ENCODE measurements at regions of chr6 and their contacts with region 1.

Region 1: GRCh38 chr6:143427109-143427817 is 23.2 kb downstream of the ADAT2 start:
- DNase-seq: peak; percentile 68 to 78
- H3K4me3 ChIP-seq: no peak overlapping the region
- H3K4me3 Mint-ChIP-seq: no peak overlapping the region
- H3K27ac Mint-ChIP-seq: no peak overlapping the region
- H3K4me1 ChIP-seq: no peaks in the 10 kb centered on the region
- H3K4me1 Mint-ChIP-seq: no peaks in the 10 kb centered on the region
- H3K27me3 ChIP-seq: no peaks in the 10 kb centered on the region
- H3K27me3 Mint-ChIP-seq: no peaks in the 10 kb centered on the region
- CTCF ChIP-seq: peak; percentile 90 to 99

Region 2: GRCh38 chr6:142474531-142475289 is 952.6 kb before region 1 on chr6:
- CTCF ChIA-PET with region 1: interaction called, 9 read pairs
- POLR2A ChIA-PET with region 1: no interaction called
- intact Hi-C with region 1: loop called (anchors 1 kb)
- DNase-seq: peak; percentile 67 to 69
- H3K4me3 ChIP-seq: no peak overlapping the region
- H3K4me3 Mint-ChIP-seq: no peak overlapping the region
- H3K27ac Mint-ChIP-seq: no peak overlapping the region
- H3K4me1 ChIP-seq: no peaks in the 10 kb centered on the region
- H3K4me1 Mint-ChIP-seq: no peaks in the 10 kb centered on the region
- H3K27me3 ChIP-seq: no peaks in the 10 kb centered on the region
- H3K27me3 Mint-ChIP-seq: peaks cover 1% of the 10 kb centered on the region
- CTCF ChIP-seq: peak; percentile 57 to 60

Region 3: DNA sequence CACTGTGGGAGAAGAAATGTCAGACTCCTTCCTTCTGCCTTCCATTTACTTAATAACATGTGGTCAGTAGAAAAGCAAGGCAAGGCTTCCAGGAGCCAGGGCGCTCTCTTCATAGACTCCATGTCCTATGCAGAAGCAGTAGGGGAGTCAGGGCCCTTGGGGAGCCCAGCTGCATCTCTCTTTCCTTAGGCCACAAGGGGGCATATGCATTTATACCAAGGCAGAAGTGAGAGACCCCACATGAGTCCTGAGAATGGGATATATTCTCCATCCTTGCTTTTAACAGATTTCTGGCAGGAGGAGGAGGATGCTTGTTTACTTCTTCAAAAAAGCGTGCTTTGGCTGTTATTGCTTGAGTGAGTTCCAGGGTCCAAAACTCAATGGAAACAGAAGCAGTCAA is 680.7 kb before region 1 on chr6:
- CTCF ChIA-PET with region 1: no interaction called
- POLR2A ChIA-PET with region 1: no interaction called
- intact Hi-C with region 1: loop called (anchors 1 kb)
- DNase-seq: peak; percentile 36 to 47
- H3K4me3 ChIP-seq: no peak overlapping the region
- H3K4me3 Mint-ChIP-seq: no peak overlapping the region
- H3K27ac Mint-ChIP-seq: no peak overlapping the region
- H3K4me1 ChIP-seq: no peaks in the 10 kb centered on the region
- H3K4me1 Mint-ChIP-seq: no peaks in the 10 kb centered on the region
- H3K27me3 ChIP-seq: no peaks in the 10 kb centered on the region
- H3K27me3 Mint-ChIP-seq: peaks cover 6% of the 10 kb centered on the region
- CTCF ChIP-seq: peak; percentile 46 to 61

Region 4: DNA sequence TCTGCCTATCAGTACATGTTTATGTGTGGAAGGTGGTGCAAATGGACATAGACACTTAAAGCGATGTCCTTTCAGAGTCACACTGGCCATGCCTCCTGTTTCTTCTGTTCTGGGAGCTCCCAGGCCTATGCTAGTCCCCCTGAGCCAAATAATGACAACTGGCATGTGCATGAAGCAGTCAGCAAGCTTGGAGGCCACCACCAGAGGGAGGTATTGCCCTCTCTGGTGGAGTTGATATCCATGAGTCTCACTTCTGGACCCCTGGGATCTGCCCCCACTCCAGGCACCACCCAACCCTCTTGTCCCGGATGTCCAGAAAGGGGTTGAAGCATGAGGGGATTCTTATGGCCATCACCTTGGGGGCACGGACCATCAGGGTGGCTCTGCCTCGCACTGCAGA is 194.4 kb before region 1 on chr6:
- CTCF ChIA-PET with region 1: interaction called, 5 read pairs
- POLR2A ChIA-PET with region 1: no interaction called
- intact Hi-C with region 1: loop called (anchors 1 kb)
- DNase-seq: peak; percentile 49 to 54
- H3K4me3 ChIP-seq: no peak overlapping the region
- H3K4me3 Mint-ChIP-seq: no peak overlapping the region
- H3K27ac Mint-ChIP-seq: no peak overlapping the region
- H3K4me1 ChIP-seq: peaks cover 10% of the 10 kb centered on the region
- H3K4me1 Mint-ChIP-seq: peaks cover 7% of the 10 kb centered on the region
- H3K27me3 ChIP-seq: no peaks in the 10 kb centered on the region
- H3K27me3 Mint-ChIP-seq: no peaks in the 10 kb centered on the region
- CTCF ChIP-seq: peak; percentile 54 to 67

Region 5: GRCh38 chr6:143337201-143337949 is 89.9 kb before region 1 on chr6:
- CTCF ChIA-PET with region 1: interaction called, 3 read pairs
- POLR2A ChIA-PET with region 1: no interaction called
- intact Hi-C with region 1: loop called (anchors 1 kb)
- DNase-seq: peak; percentile 62 to 73
- H3K4me3 ChIP-seq: no peak overlapping the region
- H3K4me3 Mint-ChIP-seq: no peak overlapping the region
- H3K27ac Mint-ChIP-seq: no peak overlapping the region
- H3K4me1 ChIP-seq: no peaks in the 10 kb centered on the region
- H3K4me1 Mint-ChIP-seq: no peaks in the 10 kb centered on the region
- H3K27me3 ChIP-seq: no peaks in the 10 kb centered on the region
- H3K27me3 Mint-ChIP-seq: no peaks in the 10 kb centered on the region
- CTCF ChIP-seq: peak; percentile 57 to 61

Measured in Caco-2 (cell line).